GM10248 (cell line): ENCODE measurements at regions of chr13 and their contacts with region 1.

Region 1: GRCh38 chr13:46721054-46721453 is 75.9 kb downstream of the ESD start:
- DNase-seq: peak; percentile 21
- CTCF ChIP-seq: peak; percentile 52

Region 2: DNA sequence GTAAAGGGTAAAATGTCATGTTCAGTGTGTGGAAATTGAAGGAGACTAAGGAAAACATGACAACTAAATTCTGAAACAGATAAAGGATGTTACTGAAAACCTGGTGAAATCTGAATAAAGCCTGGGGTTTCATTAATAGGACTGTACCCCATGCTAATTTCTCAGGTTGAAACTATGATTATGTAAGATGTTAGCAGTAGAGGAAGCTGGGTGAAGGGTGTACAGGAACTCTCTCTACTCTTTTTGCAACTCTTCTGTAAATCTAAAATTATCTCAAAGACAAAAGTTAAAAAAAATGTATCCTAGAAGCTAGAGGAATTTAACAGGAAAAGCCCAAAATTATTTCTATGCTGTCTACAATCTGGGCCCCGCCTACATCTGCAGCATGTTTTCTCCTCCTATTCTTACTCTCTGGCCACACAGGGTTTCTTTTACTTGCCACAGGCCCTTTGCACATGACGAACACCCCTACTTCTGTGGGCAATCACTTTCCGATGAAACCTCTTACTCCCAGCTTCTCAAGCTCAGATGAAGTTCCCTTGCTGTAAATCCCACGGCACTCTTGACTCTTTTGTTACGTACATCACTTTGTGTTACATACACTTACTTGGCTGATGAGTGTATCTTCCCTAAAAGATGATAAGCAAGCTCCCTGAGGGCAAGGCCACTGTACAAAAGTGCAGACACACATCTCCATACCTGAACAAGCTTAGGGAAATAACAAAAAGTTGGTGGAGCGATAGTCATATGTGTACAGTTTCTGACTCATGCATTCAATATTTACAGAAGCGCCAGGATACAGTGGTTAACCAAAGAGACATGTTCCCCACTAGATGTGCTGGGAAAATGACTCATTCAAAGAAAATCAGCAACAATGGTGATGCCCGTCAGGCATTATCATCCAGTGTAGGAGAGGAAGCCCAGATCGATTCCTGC is 366.6 kb before region 1 on chr13:
- CTCF ChIA-PET with region 1: no interaction called
- POLR2A ChIA-PET with region 1: no interaction called
- DNase-seq: no peak
- CTCF ChIP-seq: no peak

Region 3: GRCh38 chr13:46492946-46493345 is 228.1 kb before region 1 on chr13:
- CTCF ChIA-PET with region 1: interaction called, 20 read pairs
- POLR2A ChIA-PET with region 1: no interaction called
- DNase-seq: peak; percentile 44
- CTCF ChIP-seq: peak; percentile 44

Region 4: GRCh38 chr13:46731523-46731922 is 10.5 kb after region 1 on chr13:
- CTCF ChIA-PET with region 1: interaction called, 21 read pairs
- POLR2A ChIA-PET with region 1: no interaction called
- DNase-seq: no peak
- CTCF ChIP-seq: no peak